Activated CD4-positive, alpha-beta memory T cell treated with anti-CD3 and anti-CD28 coated beads for 36 hours (primary cell): ENCODE measurements at regions of chr6 and their contacts with region 1.

Region 1: GRCh38 chr6:7389451-7390225 is at the starts of genes CAGE1 and RIOK1:
- DNase-seq: peak; percentile 98
- H3K4me3 Mint-ChIP-seq: peak within 1 kb of the TSS; percentile 89
- H3K27ac Mint-ChIP-seq: peak within 1 kb of the TSS; percentile 97
- H3K4me1 Mint-ChIP-seq: peaks cover 36% of the 10 kb centered on the region
- H3K27me3 Mint-ChIP-seq: no peaks in the 10 kb centered on the region
- total RNA-seq, gene CAGE1: 0.12 to 0.22 TPM
- total RNA-seq, gene RIOK1: 33.5 to 38.7 TPM

Region 2: DNA sequence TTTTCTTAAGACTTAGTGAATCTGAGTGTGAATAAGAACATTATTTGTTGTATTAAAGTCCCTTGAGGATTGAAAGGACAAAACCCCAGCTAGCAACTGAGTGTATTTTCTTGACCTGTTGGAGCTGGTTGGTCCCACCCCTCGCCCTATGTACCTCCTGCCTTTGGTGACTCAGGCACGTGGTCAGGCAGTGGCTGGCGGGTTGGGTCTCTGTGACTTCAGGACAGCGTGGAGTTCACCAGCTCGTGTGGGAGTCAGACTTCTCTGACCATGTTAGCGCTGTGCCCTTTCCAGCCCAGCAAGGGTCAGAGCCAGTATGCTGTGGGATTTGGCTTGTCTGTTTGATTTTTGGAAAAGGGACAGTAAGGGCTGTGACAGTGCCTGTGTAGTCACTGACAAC is 170.3 kb before region 1 on chr6:
- CTCF ChIA-PET with region 1: no interaction called
- POLR2A ChIA-PET with region 1: no interaction called
- intact Hi-C with region 1: no loop called
- DNase-seq: peak; percentile 19
- H3K4me3 Mint-ChIP-seq: no peak overlapping the region
- H3K27ac Mint-ChIP-seq: no peak overlapping the region
- H3K4me1 Mint-ChIP-seq: no peaks in the 10 kb centered on the region
- H3K27me3 Mint-ChIP-seq: no peaks in the 10 kb centered on the region

Region 3: DNA sequence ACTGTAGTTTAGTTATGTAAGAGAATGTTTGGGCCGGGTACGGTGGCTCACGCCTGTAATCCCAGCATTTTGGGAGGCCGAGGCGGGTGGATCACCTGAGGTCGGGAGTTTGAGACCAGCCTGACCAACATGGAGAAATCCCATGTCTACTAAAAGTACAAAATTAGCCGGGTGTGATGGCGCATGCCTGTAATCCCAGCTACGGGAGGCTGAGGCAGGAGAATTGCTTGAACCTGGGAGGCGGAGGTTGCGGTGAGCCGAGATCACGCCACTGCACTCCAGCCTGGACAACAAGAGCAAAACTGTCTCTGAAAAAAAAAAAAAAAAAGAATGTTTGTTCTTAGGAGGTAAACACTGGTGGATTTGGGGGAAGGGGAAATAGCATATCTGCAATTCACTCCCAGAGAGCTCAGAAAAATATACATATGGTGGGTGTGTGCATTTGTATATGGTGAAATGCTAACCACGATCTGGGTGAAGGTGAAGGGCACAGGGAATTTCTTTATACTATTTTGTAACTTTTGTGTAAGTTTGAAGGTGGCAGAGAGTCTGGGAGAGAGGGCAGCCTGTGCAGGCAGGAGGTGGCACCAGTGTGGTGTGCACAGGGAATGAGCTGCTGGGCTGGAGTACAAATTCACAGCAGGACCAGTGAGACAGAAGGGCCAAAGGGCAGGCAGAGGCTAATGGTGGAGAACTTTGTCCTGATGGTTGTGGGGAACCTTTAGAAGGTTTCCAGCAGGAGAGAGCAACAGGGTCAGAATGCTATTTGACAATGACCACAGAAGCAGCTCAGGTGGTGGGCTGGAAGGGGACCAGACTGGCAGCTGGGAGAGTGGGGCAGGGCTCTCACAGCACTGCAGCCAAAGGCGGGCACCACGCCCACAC is 119.1 kb before region 1 on chr6:
- CTCF ChIA-PET with region 1: interaction called, 14 read pairs
- POLR2A ChIA-PET with region 1: interaction called, 4 read pairs
- intact Hi-C with region 1: no loop called
- DNase-seq: no peak
- H3K4me3 Mint-ChIP-seq: no peak overlapping the region
- H3K27ac Mint-ChIP-seq: no peak overlapping the region
- H3K4me1 Mint-ChIP-seq: peaks cover under 1% of the 10 kb centered on the region
- H3K27me3 Mint-ChIP-seq: no peaks in the 10 kb centered on the region

Region 4: DNA sequence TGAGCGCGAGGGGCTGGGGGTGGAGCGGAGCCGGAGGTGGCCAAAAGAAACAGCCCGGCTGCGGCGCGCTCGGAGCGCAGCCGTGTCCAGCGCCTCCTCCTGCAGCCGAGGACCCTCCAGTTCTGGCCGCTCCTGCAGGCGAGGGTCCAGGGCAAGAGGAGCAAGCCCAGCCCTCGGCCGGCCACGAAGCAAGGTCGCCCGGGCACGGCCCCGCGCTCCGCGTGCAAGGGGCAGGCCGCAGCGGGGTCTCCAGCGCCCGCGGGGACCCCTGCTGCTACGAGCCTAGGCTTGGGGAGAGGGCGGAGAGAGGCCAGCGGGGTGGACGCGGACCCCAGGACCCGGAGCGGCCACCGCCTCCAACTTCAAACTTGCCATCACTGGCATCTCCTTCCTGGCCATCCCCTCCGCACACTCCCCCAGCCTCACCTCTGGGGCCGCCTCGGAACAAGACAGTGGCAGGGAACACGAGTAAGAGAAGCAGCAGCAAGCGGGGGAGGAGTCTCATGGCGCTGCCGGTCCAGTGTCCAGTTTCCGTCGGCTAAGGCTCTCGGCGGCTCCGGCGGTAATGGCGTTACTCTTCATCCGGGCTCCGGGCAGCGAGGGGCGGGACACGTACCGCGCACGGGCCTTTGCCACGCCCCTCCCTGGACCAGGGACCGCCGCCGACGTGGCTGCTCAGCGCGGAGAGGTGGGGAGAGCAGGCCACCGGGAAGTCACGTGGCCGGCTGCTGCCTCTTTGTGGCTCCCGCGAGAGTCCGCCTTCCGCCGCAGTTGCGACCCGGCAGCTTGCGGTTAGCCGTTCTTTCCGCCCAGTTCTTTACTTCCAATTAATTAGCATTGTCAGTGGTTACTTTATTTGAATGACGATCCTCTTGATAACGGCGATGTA is 76.8 kb before region 1 on chr6 and contains the start of gene SSR1:
- CTCF ChIA-PET with region 1: interaction called, 3 read pairs
- POLR2A ChIA-PET with region 1: interaction called, 19 read pairs
- intact Hi-C with region 1: loop called (anchors 1 kb)
- DNase-seq: peak; percentile 97
- H3K4me3 Mint-ChIP-seq: peak within 1 kb of the TSS; percentile 92
- H3K27ac Mint-ChIP-seq: peak within 1 kb of the TSS; percentile 95
- H3K4me1 Mint-ChIP-seq: peaks cover 40% of the 10 kb centered on the region
- H3K27me3 Mint-ChIP-seq: no peaks in the 10 kb centered on the region
- total RNA-seq, gene SSR1: 156 to 164 TPM

Region 5: GRCh38 chr6:7410851-7411250 is 21.2 kb after region 1 on chr6:
- CTCF ChIA-PET with region 1: no interaction called
- POLR2A ChIA-PET with region 1: no interaction called
- intact Hi-C with region 1: no loop called
- DNase-seq: no peak
- H3K4me3 Mint-ChIP-seq: no peak overlapping the region
- H3K27ac Mint-ChIP-seq: no peak overlapping the region
- H3K4me1 Mint-ChIP-seq: no peaks in the 10 kb centered on the region
- H3K27me3 Mint-ChIP-seq: no peaks in the 10 kb centered on the region

Region 6: DNA sequence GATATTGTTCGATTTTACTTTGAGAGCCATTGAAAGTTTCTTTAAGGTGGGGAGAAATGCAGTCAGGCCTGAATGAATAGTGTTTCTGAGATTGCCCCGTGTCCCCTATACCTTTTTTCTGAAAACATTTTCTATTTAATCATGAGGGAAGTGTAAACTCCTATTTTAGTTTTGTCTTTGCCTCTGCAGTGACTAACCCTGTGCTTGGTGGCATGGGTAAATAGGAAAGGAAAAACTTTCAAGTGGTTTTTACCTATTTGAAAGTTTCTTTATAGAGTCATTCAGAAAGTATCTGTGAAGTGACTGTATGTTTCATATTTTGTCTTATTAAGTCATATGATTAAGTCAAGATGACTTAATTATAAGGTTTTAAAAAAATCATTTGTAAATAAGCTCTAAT is 214.9 kb after region 1 on chr6:
- CTCF ChIA-PET with region 1: no interaction called
- POLR2A ChIA-PET with region 1: no interaction called
- intact Hi-C with region 1: loop called (anchors 5 kb)
- DNase-seq: no peak
- H3K4me3 Mint-ChIP-seq: no peak overlapping the region
- H3K27ac Mint-ChIP-seq: peak overlapping the region; percentile 34
- H3K4me1 Mint-ChIP-seq: peaks cover 18% of the 10 kb centered on the region
- H3K27me3 Mint-ChIP-seq: no peaks in the 10 kb centered on the region